Esophagus muscularis mucosa (tissue), 4 donors: ENCODE measurements at regions of chr15 and their contacts with region 1.

Region 1: DNA sequence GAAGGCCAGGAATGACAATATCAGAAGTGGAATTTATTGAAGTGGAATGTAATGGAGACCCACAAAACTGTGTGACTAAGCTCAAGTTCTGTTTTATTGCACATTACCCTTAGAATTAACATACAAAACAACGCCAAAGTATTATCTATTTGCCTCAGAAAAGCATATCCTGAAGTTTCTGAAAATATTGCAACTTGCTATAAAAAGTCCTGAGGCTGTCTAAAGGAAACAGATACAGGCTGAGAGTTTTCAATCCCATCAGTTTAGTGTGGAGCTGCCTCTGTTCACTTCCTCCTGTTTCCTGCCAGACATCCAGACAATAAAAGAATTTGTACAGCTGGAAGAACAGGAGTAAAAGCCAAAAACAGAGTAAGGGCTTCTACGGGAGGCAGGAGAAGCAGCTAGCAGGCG is 108.8 kb downstream of the FBN1 start:
- DNase-seq: no peak
- H3K4me3 ChIP-seq: no peak overlapping the region
- H3K27ac ChIP-seq: peak overlapping the region; percentile 62 to 78 (median 74)
- H3K4me1 ChIP-seq: peaks cover 26 to 94% (median 85%) of the 10 kb centered on the region in 4 donors
- H3K27me3 ChIP-seq: no peaks in the 10 kb centered on the region
- CTCF ChIP-seq: no peak
- EP300 ChIP-seq: no peak
- POLR2A ChIP-seq: no peak

Region 2: GRCh38 chr15:48631176-48631770 is 94.6 kb after region 1 on chr15:
- intact Hi-C with region 1: loop called (anchors 5 kb)
- DNase-seq: no peak
- H3K4me3 ChIP-seq: no peak overlapping the region
- H3K27ac ChIP-seq: peak overlapping the region; percentile 12 to 61 (median 34)
- H3K4me1 ChIP-seq: peaks cover 7 to 96% (median 89%) of the 10 kb centered on the region in 4 donors
- H3K27me3 ChIP-seq: no peaks in the 10 kb centered on the region
- CTCF ChIP-seq: no peak
- EP300 ChIP-seq: no peak
- POLR2A ChIP-seq: no peak